Dendritic cell treated with granulocyte-macrophage colony-stimulating factor and Interleukin-4, amounts not matched to agents 40 ng/mL and 50 ng/mL, for 4 days (primary cell): ENCODE measurements at regions of chr10 and their contacts with region 1.

Region 1: GRCh38 chr10:84205049-84205852 is 10.9 kb downstream of the CDHR1 start:
- H3K4me3 Mint-ChIP-seq: no peak overlapping the region
- H3K27ac Mint-ChIP-seq: no peak overlapping the region
- H3K4me1 Mint-ChIP-seq: no peaks in the 10 kb centered on the region
- H3K27me3 Mint-ChIP-seq: peaks cover 9% of the 10 kb centered on the region

Region 2: GRCh38 chr10:84114088-84114667 is 91.1 kb before region 1 on chr10:
- intact Hi-C with region 1: no loop called
- H3K4me3 Mint-ChIP-seq: no peak overlapping the region
- H3K27ac Mint-ChIP-seq: no peak overlapping the region
- H3K4me1 Mint-ChIP-seq: no peaks in the 10 kb centered on the region
- H3K27me3 Mint-ChIP-seq: peaks cover 5% of the 10 kb centered on the region

Region 3: DNA sequence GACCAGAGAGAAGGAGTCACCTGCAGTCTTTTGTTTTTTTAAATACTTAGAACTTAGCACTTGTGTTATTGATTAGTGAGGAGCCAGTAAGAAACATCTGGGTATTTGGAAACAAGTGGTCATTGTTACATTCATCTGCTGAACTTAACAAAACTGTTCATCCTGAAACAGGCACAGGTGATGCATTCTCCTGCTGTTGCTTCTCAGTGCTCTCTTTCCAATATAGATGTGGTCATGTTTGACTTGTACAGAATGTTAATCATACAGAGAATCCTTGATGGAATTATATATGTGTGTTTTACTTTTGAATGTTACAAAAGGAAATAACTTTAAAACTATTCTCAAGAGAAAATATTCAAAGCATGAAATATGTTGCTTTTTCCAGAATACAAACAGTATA is 52.5 kb before region 1 on chr10:
- intact Hi-C with region 1: loop called (anchors 1 kb)
- H3K4me3 Mint-ChIP-seq: no peak overlapping the region
- H3K27ac Mint-ChIP-seq: no peak overlapping the region
- H3K4me1 Mint-ChIP-seq: peaks cover 8% of the 10 kb centered on the region
- H3K27me3 Mint-ChIP-seq: no peaks in the 10 kb centered on the region